ENCODE measurements at regions of chr16 and their contacts with region 1.

Region 1: GRCh38 chr16:30378236-30379204 is 3.8 kb downstream of the SEPTIN1 start:
- DNase-seq: peak; percentile 95
- ATAC-seq: peak; percentile 92
- H3K4me3 ChIP-seq: peak overlapping the region; percentile 71 to 97 (median 80)
- H3K27ac ChIP-seq: peak overlapping the region; percentile 90
- H3K4me1 ChIP-seq: peaks cover 52% of the 10 kb centered on the region
- H3K27me3 ChIP-seq: no peaks in the 10 kb centered on the region
- CTCF ChIP-seq: peak; percentile 53
- EP300 ChIP-seq: peak in 1 of 2 experiments; percentile 64; a peak in 2 of 4 replicates
- POLR2A ChIP-seq: peak; percentile 65 to 98; a peak in 3 of 4 replicates
- RAD21 ChIP-seq: peak; percentile 55

Region 2: DNA sequence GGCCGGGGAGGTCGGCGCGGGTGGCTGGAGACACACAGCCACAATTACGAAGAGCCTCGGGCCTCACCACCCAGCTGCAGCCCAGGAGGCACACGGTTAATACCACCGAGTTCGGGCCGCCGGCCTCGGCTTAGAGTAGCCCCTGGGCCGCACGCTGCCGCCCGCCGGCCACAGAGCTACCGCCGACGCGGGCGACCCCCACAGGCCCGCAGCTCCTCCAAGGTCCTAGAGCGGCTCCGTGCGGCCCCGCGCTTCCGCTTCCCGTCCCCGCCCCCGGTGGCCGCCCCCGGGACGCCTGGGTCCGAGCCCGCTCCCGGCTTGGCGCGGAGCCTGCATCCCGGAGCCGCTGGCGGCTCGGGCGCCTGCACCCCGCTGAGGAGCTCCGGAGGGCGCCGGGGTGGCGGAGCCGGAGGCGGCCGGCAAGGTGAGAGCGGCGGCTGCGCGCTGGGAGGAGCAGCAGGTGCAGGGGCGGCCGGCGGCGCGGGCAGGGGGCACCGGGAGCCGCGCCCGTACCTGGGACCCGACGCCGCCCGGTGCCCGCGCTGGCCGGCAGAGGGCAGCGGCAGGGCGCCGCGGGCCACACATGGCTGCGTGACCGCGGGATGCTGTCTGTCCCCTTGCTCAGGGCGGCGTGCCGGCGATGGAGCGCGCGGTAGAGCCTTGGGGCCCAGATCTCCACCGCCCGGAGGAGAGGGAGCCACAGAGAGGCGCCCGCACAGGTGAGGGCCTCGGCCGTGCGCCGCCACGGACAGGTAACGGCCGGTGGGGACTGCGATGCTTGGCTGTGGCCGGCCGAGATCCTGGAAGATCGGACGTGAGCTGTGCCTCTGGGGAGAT is 16.9 kb after region 1 on chr16 and contains the start of gene ZNF48:
- CTCF ChIA-PET with region 1: no interaction called
- POLR2A ChIA-PET with region 1: interaction called, 14 read pairs
- in situ Hi-C with region 1: no loop called
- intact Hi-C with region 1: loop called (anchors 1 kb)
- DNase-seq: peak; percentile 89
- ATAC-seq: peak; percentile 94
- H3K4me3 ChIP-seq: peak within 1 kb of the TSS; percentile 75 to 93 (median 75)
- H3K27ac ChIP-seq: peak within 1 kb of the TSS; percentile 73
- H3K4me1 ChIP-seq: peaks cover 36% of the 10 kb centered on the region
- H3K27me3 ChIP-seq: no peaks in the 10 kb centered on the region
- CTCF ChIP-seq: peak; percentile 78
- EP300 ChIP-seq: 0 out of 4 replicates have a peak, but pooled peaks of 1 of the 2 experiments have one; percentile 19
- POLR2A ChIP-seq: peak in 1 of 2 experiments; percentile 70; a peak in 3 of 4 replicates
- RAD21 ChIP-seq: peak; percentile 92
- total RNA-seq, gene ZNF48: 10.9 and 12.3 TPM in 2 replicates

Region 3: DNA sequence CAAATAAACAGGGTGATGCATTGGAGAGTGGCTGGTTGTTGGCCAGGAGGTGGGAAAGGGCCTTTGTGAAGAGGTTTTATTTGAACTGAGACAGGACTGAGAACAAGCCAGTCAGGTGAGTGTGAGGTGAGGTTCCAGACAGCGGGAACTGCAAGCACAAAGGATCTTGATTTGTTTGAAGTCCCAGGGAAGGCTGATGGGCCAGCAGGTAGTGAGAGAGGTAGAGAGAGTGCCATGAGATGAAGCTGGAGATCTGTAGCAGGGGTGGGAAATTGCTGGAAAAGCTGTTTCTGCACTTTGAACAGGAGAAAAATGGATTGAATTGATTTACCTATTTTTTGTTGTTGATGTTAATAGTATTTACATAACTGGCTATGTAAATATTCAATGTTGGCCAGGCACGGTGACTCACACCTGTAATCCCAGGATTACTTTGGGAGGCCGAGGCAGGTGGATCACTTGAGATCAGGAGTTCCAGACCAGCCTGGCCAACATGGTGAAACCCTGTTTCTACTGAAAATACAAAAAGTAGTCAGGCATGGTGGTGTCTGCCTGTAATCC is 59.0 kb after region 1 on chr16:
- CTCF ChIA-PET with region 1: no interaction called
- POLR2A ChIA-PET with region 1: no interaction called
- in situ Hi-C with region 1: no loop called
- intact Hi-C with region 1: loop called (anchors 2 kb)
- DNase-seq: peak; percentile 72
- ATAC-seq: peak; percentile 68
- H3K4me3 ChIP-seq: 0 out of 6 replicates have a peak overlapping the region, but pooled peaks of 1 of the 3 experiments have one; percentile 5
- H3K27ac ChIP-seq: peak overlapping the region; percentile 50
- H3K4me1 ChIP-seq: peaks cover 69% of the 10 kb centered on the region
- H3K27me3 ChIP-seq: peaks cover 0 to 5% of the 10 kb centered on the region in 2 experiments; a peak in 2 of 5 replicates
- CTCF ChIP-seq: no peak
- EP300 ChIP-seq: peak in 1 of 2 experiments; percentile 72; a peak in 2 of 4 replicates
- POLR2A ChIP-seq: no peak
- RAD21 ChIP-seq: peak; percentile 7; the same call in 1 of the 2 replicates